ENCODE measurements at regions of chr9 and their contacts with region 1.

Region 1: GRCh38 chr9:110638381-110638954 is 30.1 kb upstream of the MUSK start:
- DNase-seq: no peak
- ATAC-seq: no peak

Region 2: GRCh38 chr9:110579034-110579861 is 59.2 kb before region 1 on chr9 and contains the start of gene SVEP1:
- intact Hi-C with region 1: no loop called
- DNase-seq: peak; percentile 71
- ATAC-seq: peak; percentile 82
- total RNA-seq, gene SVEP1: 5.7 TPM

Region 3: GRCh38 chr9:110782701-110783100 is 144.2 kb after region 1 on chr9:
- intact Hi-C with region 1: no loop called
- DNase-seq: no peak
- ATAC-seq: no peak

Region 4: GRCh38 chr9:111301195-111301594 is 662.7 kb after region 1 on chr9:
- intact Hi-C with region 1: loop called (anchors 10 kb)
- DNase-seq: no peak
- ATAC-seq: no peak